ENCODE measurements at regions of chr4 and their contacts with region 1.

Region 1: GRCh38 chr4:7192252-7193029 is at the start of gene SORCS2:
- DNase-seq: peak; percentile 45
- H3K4me3 Mint-ChIP-seq: no peak within 1 kb of the TSS
- H3K27ac Mint-ChIP-seq: no peak within 1 kb of the TSS
- H3K4me1 Mint-ChIP-seq: peaks cover 13% of the 10 kb centered on the region
- H3K27me3 Mint-ChIP-seq: peaks cover 48% of the 10 kb centered on the region
- CTCF ChIP-seq: peak; percentile 72
- total RNA-seq, gene SORCS2: 0.05 TPM in 1 of 2 replicates, not detected in the other

Region 2: GRCh38 chr4:7276515-7276914 is 84.1 kb after region 1 on chr4:
- CTCF ChIA-PET with region 1: interaction called, 11 read pairs
- POLR2A ChIA-PET with region 1: no interaction called
- intact Hi-C with region 1: no loop called
- DNase-seq: no peak
- H3K4me3 Mint-ChIP-seq: no peak overlapping the region
- H3K27ac Mint-ChIP-seq: no peak overlapping the region
- H3K4me1 Mint-ChIP-seq: no peaks in the 10 kb centered on the region
- H3K27me3 Mint-ChIP-seq: peaks cover 15% of the 10 kb centered on the region
- CTCF ChIP-seq: no peak

Region 3: GRCh38 chr4:7295911-7296660 is 103.6 kb after region 1 on chr4:
- CTCF ChIA-PET with region 1: interaction called, 49 read pairs
- POLR2A ChIA-PET with region 1: interaction called, 4 read pairs
- intact Hi-C with region 1: loop called (anchors 1 kb)
- DNase-seq: peak; percentile 51
- H3K4me3 Mint-ChIP-seq: no peak overlapping the region
- H3K27ac Mint-ChIP-seq: no peak overlapping the region
- H3K4me1 Mint-ChIP-seq: peaks cover 5% of the 10 kb centered on the region
- H3K27me3 Mint-ChIP-seq: peaks cover 9% of the 10 kb centered on the region
- CTCF ChIP-seq: peak; percentile 74

Region 4: DNA sequence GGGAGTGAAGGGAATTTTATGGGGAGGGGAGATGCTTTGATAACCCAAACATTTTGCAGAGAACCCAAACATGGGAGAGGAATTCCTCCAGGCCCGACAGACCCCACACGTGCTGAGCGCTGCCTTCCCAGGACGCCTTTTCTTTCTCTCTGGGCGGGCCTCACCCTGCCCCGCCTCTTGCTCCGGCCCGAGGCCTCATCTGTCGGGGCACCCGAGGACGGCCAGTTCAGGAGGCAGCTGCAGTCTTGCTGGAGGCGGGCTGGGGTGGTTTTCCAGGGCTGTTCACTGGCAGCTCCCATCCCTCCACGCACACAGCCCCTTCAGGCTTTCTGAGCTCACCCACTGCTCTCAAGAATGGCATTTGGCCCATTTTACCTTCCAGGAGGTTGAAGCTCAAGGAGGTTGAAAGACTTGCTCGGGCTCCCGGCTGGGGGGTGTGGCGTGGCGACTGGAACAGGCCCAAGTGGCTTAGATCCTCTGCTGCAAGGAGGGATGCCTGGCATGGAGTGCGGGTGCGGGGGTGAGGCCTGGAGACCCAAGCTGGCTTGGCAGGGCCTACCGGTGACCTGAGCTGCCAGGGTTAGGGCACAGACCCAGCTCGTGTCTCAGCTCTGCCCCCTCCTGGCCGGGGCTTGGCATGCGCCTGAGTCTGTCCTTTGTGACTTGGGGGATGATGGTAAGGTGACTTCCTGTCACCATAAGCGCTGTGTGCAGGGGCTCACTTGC is 143.1 kb after region 1 on chr4:
- CTCF ChIA-PET with region 1: interaction called, 10 read pairs
- POLR2A ChIA-PET with region 1: no interaction called
- intact Hi-C with region 1: no loop called
- DNase-seq: peak; percentile 58
- H3K4me3 Mint-ChIP-seq: no peak overlapping the region
- H3K27ac Mint-ChIP-seq: no peak overlapping the region
- H3K4me1 Mint-ChIP-seq: peaks cover 6% of the 10 kb centered on the region
- H3K27me3 Mint-ChIP-seq: no peaks in the 10 kb centered on the region
- CTCF ChIP-seq: peak; percentile 63

Region 5: DNA sequence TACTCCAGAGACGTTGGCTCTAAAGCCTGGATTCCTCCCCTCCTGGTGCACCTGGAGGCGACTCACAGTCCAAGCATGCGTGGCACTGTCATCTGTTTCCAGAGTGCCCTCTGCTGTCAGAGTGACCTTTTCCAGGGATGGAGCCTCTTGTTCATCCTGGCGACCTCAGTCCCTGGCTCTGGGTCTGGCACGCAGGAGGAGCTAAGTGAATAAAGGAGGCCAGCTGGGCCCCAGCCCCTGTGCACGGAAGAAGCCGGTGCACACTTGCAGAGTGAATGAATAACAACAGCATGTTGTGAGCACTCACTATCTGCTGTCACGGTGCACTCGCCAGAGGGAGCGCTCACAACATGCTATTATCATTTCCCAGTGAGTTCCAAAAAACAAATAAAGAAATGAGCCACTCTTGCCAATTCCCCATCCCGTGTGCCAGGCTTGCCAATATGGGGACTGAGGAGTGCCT is 270.1 kb after region 1 on chr4:
- CTCF ChIA-PET with region 1: interaction called, 29 read pairs
- POLR2A ChIA-PET with region 1: no interaction called
- intact Hi-C with region 1: loop called (anchors 1 kb)
- DNase-seq: peak; percentile 68
- H3K4me3 Mint-ChIP-seq: no peak overlapping the region
- H3K27ac Mint-ChIP-seq: no peak overlapping the region
- H3K4me1 Mint-ChIP-seq: peaks cover 10% of the 10 kb centered on the region
- H3K27me3 Mint-ChIP-seq: no peaks in the 10 kb centered on the region
- CTCF ChIP-seq: peak; percentile 38

Region 6: DNA sequence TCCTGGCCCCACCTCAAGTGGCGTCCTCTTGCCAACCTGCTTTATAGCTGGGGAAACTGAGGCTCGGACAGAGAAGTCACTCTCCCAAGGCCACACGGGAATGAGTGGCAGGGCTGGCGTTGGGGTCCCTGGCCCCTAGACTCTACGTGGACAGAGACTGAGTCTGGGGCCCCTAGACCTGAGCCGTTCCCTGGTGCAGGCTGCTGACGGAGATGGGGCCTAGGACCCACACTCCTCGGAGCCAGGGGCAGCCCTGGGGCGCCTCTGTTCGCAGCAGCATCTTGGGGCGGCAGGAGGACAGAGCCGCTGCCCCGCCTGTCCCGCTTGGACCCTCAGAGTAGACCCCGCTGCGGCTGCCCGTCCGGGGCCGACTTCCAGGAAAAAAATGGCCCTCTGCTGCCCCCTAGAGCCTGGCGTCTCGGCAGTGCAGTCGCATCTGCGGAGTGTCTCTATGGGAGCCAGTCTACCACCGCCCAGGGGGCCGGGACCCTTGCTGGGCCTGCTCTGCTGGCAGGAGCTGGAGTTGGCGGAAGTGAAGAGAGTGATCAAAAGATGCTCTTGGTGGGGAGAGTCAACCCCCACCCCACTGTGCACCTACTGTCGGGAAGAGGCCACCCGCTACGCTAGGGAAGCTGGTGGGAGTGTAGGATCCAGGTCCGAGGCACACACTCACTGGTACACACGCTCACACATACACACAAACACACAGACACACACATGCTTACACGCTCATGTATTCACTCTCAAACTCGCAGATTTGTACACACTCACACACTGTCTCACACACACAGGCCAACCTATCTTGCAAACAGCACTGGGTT is 527.1 kb after region 1 on chr4:
- CTCF ChIA-PET with region 1: interaction called, 7 read pairs
- POLR2A ChIA-PET with region 1: no interaction called
- intact Hi-C with region 1: loop called (anchors 2 kb)
- DNase-seq: peak; percentile 38
- H3K4me3 Mint-ChIP-seq: no peak overlapping the region
- H3K27ac Mint-ChIP-seq: no peak overlapping the region
- H3K4me1 Mint-ChIP-seq: no peaks in the 10 kb centered on the region
- H3K27me3 Mint-ChIP-seq: peaks cover 24% of the 10 kb centered on the region
- CTCF ChIP-seq: peak; percentile 75